CD4-positive, alpha-beta T cell (primary cell): ENCODE measurements at regions of chr4 and their contacts with region 1.

Region 1: DNA sequence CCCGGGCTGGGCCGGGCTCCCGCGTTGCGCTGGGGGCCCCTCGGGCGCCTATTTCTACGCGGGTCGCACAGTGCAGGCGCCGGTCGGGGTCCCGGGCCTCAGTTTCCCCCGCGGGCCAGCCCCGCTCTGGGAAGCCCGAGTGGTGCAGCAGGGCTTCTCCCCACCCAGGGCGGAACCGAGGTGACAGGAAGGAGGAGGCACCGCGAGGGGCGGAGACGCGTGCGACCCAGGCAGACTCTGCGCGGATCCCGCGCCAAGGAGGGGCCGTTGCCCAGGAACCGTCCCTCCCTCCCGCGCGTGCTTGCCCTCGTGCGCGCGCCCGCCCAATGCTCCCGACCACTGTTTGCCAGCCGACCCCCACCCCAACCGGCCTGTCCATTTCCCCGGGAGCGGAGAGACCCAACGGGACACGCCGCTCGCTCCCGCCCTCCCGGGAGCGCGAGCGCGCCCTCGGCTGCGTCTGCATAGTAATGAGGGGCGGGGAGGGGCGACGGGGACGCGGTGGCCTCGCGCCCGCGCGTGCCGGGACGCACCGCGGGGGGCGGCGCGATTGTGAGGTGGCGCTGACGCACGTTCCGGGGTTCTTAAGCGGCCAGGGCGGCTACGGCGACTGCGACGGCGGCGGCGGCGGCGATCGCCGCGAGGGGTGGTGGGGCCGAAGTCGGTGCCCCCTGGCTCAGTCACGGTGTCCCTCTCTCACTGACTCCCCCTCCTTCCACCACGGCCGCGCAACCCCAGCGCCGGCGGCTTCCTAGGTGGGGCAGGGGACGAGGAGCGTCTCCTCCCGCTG is at the start of gene CPEB2:
- DNase-seq: peak; percentile 84 to 97 (median 90)
- ATAC-seq: peak; percentile 65
- H3K4me3 ChIP-seq: peak within 1 kb of the TSS; percentile 88
- H3K4me3 Mint-ChIP-seq: peak within 1 kb of the TSS; percentile 99
- H3K27ac ChIP-seq: peak within 1 kb of the TSS; percentile 100
- H3K27ac Mint-ChIP-seq: peak within 1 kb of the TSS; percentile 99
- H3K4me1 ChIP-seq: no peaks in the 10 kb centered on the region
- H3K4me1 Mint-ChIP-seq: peaks cover 26% of the 10 kb centered on the region
- H3K27me3 ChIP-seq: no peaks in the 10 kb centered on the region
- H3K27me3 Mint-ChIP-seq: no peaks in the 10 kb centered on the region
- CTCF ChIP-seq: no peak
- total RNA-seq, gene CPEB2: 26.4 to 27.0 TPM

Region 2: GRCh38 chr4:13627606-13628301 is 1374.3 kb before region 1 on chr4 and contains the start of gene BOD1L1:
- CTCF ChIA-PET with region 1: no interaction called
- POLR2A ChIA-PET with region 1: interaction called, 8 read pairs
- intact Hi-C with region 1: loop called in 1 of 2 experiments (anchors 5 kb)
- DNase-seq: peak; percentile 52 to 92 (median 73)
- ATAC-seq: peak; percentile 66
- H3K4me3 ChIP-seq: peak within 1 kb of the TSS; percentile 84
- H3K4me3 Mint-ChIP-seq: peak within 1 kb of the TSS; percentile 96
- H3K27ac ChIP-seq: peak within 1 kb of the TSS; percentile 81 to 88
- H3K27ac Mint-ChIP-seq: peak within 1 kb of the TSS; percentile 94
- H3K4me1 ChIP-seq: peaks cover 22% of the 10 kb centered on the region
- H3K4me1 Mint-ChIP-seq: peaks cover 57% of the 10 kb centered on the region
- H3K27me3 ChIP-seq: no peaks in the 10 kb centered on the region
- H3K27me3 Mint-ChIP-seq: no peaks in the 10 kb centered on the region
- CTCF ChIP-seq: peak; percentile 15
- total RNA-seq, gene BOD1L1: 39.3 to 39.6 TPM

Region 3: DNA sequence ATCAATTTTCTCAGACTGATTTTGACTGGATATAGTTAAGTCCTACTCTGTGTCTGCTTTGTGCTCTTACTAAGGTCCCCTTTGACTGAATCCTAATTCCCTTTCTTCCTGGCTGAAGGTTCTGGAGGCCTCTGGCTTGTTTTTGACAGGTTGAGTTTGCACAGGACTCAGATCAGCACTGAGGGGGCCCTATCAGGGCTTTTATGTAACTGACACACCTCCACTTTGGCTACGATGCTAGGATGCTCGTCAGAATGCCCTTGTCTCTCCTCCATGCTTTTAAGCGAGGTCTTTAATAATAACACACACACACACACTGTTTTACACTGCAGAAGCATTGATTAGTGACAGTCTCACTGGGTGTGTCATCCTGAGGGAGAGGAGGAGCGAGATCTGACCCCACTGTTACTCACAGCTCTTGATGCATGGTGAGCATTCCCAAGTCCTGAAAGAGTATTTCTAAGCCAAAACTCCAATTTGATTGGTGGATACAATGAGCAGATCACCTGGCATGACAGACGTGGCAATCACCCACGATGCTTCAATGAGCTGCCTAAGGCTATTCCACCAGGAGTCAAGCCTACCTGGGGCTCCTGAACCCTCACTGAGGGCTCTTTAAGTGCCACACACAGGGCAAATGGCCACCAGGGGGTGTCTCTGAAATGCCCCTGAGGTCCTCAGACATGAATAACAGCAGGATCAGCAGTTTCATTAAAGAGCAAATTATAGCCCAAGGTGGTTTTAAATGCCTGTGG is 130.2 kb before region 1 on chr4:
- CTCF ChIA-PET with region 1: no interaction called
- POLR2A ChIA-PET with region 1: no interaction called
- intact Hi-C with region 1: loop called (anchors 1 to 5 kb)
- DNase-seq: peak in 12 of 14 experiments; percentile 3 to 54 (median 20)
- ATAC-seq: no peak
- H3K4me3 ChIP-seq: no peak overlapping the region
- H3K4me3 Mint-ChIP-seq: no peak overlapping the region
- H3K27ac ChIP-seq: no peak overlapping the region
- H3K27ac Mint-ChIP-seq: no peak overlapping the region
- H3K4me1 ChIP-seq: peaks cover 3% of the 10 kb centered on the region
- H3K4me1 Mint-ChIP-seq: peaks cover 7% of the 10 kb centered on the region
- H3K27me3 ChIP-seq: no peaks in the 10 kb centered on the region
- H3K27me3 Mint-ChIP-seq: peaks cover 34% of the 10 kb centered on the region
- CTCF ChIP-seq: no peak

Region 4: DNA sequence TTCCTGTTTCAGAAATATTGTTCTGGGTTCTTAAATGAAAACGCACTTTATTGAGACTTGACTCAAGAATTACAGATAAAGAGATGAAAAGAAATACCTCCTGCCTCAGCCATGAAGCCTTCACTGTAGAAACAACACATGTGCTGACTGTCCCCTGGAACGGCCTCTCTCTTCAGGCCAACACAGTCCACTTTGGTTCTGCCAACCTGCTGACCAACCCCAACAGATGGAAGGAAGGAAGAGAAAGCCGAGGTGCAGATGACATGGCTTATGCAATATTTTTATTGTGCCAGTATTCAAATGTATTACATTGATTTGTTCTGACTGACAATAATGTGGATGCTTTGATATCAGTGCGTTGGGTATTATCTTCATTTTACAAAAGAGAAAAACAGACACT is 171.2 kb after region 1 on chr4:
- CTCF ChIA-PET with region 1: no interaction called
- POLR2A ChIA-PET with region 1: no interaction called
- intact Hi-C with region 1: no loop called
- DNase-seq: no peak
- ATAC-seq: no peak
- H3K4me3 ChIP-seq: no peak overlapping the region
- H3K4me3 Mint-ChIP-seq: no peak overlapping the region
- H3K27ac ChIP-seq: no peak overlapping the region
- H3K27ac Mint-ChIP-seq: no peak overlapping the region
- H3K4me1 ChIP-seq: no peaks in the 10 kb centered on the region
- H3K4me1 Mint-ChIP-seq: no peaks in the 10 kb centered on the region
- H3K27me3 ChIP-seq: peaks cover 4 to 5% of the 10 kb centered on the region in 2 experiments
- H3K27me3 Mint-ChIP-seq: peaks cover 21% of the 10 kb centered on the region
- CTCF ChIP-seq: no peak

Region 5: GRCh38 chr4:15655229-15656037 is 653.4 kb after region 1 on chr4 and contains the start of gene FBXL5:
- CTCF ChIA-PET with region 1: no interaction called
- POLR2A ChIA-PET with region 1: interaction called, 16 read pairs
- intact Hi-C with region 1: loop called (anchors 1 kb)
- DNase-seq: peak; percentile 58 to 97 (median 80)
- ATAC-seq: peak; percentile 78
- H3K4me3 ChIP-seq: peak within 1 kb of the TSS; percentile 89
- H3K4me3 Mint-ChIP-seq: peak within 1 kb of the TSS; percentile 95
- H3K27ac ChIP-seq: peak within 1 kb of the TSS; percentile 90 to 93
- H3K27ac Mint-ChIP-seq: peak within 1 kb of the TSS; percentile 90
- H3K4me1 ChIP-seq: peaks cover 22% of the 10 kb centered on the region
- H3K4me1 Mint-ChIP-seq: peaks cover 46% of the 10 kb centered on the region
- H3K27me3 ChIP-seq: no peaks in the 10 kb centered on the region
- H3K27me3 Mint-ChIP-seq: no peaks in the 10 kb centered on the region
- CTCF ChIP-seq: no peak
- total RNA-seq, gene FBXL5: 60.1 to 62.5 TPM

Region 6: GRCh38 chr4:15756361-15756861 is 754.3 kb after region 1 on chr4:
- CTCF ChIA-PET with region 1: no interaction called
- POLR2A ChIA-PET with region 1: no interaction called
- intact Hi-C with region 1: loop called in 1 of 2 experiments (anchors 2 kb)
- DNase-seq: peak; percentile 44 to 93 (median 62)
- ATAC-seq: peak; percentile 81
- H3K4me3 ChIP-seq: peak overlapping the region; percentile 29
- H3K4me3 Mint-ChIP-seq: peak overlapping the region; percentile 73
- H3K27ac ChIP-seq: peak overlapping the region in 1 of 2 donors; percentile 48
- H3K27ac Mint-ChIP-seq: peak overlapping the region; percentile 86
- H3K4me1 ChIP-seq: peaks cover 36% of the 10 kb centered on the region
- H3K4me1 Mint-ChIP-seq: peaks cover 60% of the 10 kb centered on the region
- H3K27me3 ChIP-seq: no peaks in the 10 kb centered on the region
- H3K27me3 Mint-ChIP-seq: no peaks in the 10 kb centered on the region
- CTCF ChIP-seq: peak; percentile 66